Prostate gland (tissue), 2 donors: ENCODE measurements at regions of chr15 and their contacts with region 1.

Region 1: GRCh38 chr15:90219421-90220166 is 14.1 kb downstream of the CIB1 start:
- DNase-seq: no peak
- H3K4me3 ChIP-seq: no peak overlapping the region
- H3K27ac ChIP-seq: peak overlapping the region in 1 of 2 donors; percentile 29
- H3K4me1 ChIP-seq: peaks cover 2% of the 10 kb centered on the region
- H3K27me3 ChIP-seq: no peaks in the 10 kb centered on the region
- CTCF ChIP-seq: peak; percentile 24 to 69 (median 62)
- POLR2A ChIP-seq: no peak

Region 2: DNA sequence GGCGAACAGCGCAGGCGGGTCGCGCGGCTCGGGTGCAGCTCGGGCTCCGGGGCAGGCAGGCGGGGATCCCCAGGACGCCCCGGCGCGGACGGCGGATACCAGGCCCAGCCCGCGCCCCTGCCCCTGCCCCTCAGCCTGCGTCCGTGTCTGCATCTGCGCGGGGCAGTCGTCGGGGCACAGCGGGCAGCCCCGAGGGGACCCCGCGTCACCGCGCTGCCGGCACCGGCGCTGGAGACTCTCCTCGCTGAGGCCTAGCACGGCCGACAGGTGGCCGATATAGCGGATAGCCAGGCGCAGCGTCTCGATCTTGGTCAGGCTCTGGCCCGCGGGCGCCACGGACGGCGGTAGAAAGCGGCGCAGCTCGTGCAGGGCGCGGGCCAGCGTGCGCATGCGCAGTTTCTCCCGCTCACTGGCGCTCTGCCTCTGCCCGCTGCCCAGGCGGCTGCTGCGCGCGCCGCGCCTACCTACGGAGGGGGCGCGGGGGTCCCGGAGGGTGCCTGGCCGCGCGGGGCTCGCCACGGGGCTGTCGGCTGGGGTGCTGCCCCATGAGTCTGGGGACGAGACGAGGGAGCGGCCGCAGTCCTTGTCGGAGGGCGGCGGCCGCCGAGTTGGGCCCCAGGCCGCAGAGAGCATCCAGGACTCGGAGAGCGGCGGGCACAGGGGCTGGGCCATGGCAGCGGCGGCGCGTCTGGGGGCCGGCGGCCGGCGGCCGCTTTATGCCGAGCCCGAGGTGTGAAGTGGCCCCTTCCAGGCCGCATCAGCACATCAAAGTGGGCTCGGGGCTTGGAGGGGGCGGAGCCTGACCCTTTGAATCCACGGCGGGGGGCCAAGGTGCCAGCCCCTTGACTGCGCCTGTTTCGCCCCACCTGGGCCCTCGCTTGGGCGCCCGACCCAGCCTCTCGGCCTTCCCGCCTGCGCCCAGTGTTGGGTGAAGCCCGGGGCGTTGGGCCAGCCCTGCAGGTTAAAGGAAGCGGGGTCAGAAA is 468.7 kb before region 1 on chr15 and contains the start of gene MESP1:
- intact Hi-C with region 1: loop called (anchors 5 kb)
- DNase-seq: peak; percentile 89
- H3K4me3 ChIP-seq: peak within 1 kb of the TSS; percentile 51 to 64
- H3K27ac ChIP-seq: peak within 1 kb of the TSS; percentile 92 to 94
- H3K4me1 ChIP-seq: peaks cover 25% of the 10 kb centered on the region
- H3K27me3 ChIP-seq: no peaks in the 10 kb centered on the region
- CTCF ChIP-seq: peak; percentile 37 to 92 (median 67)
- POLR2A ChIP-seq: peak; percentile 73
- total RNA-seq, gene MESP1: 11.5 to 67.4 TPM

Region 3: DNA sequence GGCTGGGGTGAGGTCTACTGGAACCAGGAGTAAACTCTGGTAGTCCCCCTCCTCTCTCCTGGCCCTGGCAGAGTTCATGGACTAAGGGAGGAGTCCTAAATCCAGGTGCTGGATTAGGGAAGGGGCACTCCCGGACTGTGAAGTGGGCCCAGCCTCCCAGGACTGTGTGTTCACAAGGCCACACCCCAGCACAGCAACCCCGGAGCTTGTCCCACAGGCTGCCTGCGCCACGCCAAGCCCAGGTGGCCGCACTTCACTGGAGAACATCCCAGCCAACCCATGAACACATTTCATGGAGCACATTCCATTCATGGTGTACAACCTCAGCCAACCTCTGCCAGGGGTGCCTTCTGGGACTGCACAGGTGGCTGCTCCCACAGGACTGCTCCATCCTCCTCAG is 315.1 kb before region 1 on chr15:
- intact Hi-C with region 1: loop called (anchors 10 kb)
- DNase-seq: no peak
- H3K4me3 ChIP-seq: no peak overlapping the region
- H3K27ac ChIP-seq: no peak overlapping the region
- H3K4me1 ChIP-seq: no peaks in the 10 kb centered on the region
- H3K27me3 ChIP-seq: no peaks in the 10 kb centered on the region
- CTCF ChIP-seq: no peak
- POLR2A ChIP-seq: no peak

Region 4: DNA sequence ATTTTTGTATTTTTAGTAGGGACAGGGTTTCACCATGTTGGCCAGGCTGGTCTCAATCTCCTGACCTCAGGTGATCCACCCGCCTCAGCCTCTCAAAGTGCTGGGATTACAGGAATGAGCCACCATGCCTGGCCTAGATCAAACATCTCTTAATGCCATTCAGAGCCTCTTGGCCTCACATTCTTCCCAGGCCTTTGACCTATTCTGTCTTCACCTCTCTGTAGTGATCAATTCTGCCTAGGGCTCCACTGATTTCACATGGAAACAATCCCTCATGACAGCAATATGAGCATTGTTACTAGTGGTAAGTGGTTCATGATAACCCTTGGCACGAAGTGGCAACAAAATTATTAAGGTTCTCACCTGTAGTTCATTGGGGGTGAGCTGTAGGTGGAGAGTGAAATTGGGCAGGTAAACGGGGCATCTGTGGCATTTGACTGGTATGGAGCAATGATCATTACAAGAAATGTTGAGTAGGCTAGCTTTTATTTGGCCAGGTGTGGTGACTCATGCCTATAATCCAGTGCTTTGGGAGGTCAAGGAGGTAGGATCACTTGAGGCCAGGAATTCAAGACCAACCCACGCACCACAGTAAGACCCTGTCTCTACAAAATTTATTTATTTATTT is 302.0 kb before region 1 on chr15:
- intact Hi-C with region 1: no loop called
- DNase-seq: no peak
- H3K4me3 ChIP-seq: no peak overlapping the region
- H3K27ac ChIP-seq: no peak overlapping the region
- H3K4me1 ChIP-seq: no peaks in the 10 kb centered on the region
- H3K27me3 ChIP-seq: no peaks in the 10 kb centered on the region
- CTCF ChIP-seq: no peak
- POLR2A ChIP-seq: no peak

Region 5: GRCh38 chr15:90362936-90363212 is 143.3 kb after region 1 on chr15:
- intact Hi-C with region 1: no loop called
- DNase-seq: no peak
- H3K4me3 ChIP-seq: no peak overlapping the region
- H3K27ac ChIP-seq: no peak overlapping the region
- H3K4me1 ChIP-seq: no peaks in the 10 kb centered on the region
- H3K27me3 ChIP-seq: no peaks in the 10 kb centered on the region
- CTCF ChIP-seq: no peak
- POLR2A ChIP-seq: no peak

Region 6: GRCh38 chr15:90895336-90896117 is 675.9 kb after region 1 on chr15:
- intact Hi-C with region 1: no loop called
- DNase-seq: no peak
- H3K4me3 ChIP-seq: no peak overlapping the region
- H3K27ac ChIP-seq: no peak overlapping the region
- H3K4me1 ChIP-seq: no peaks in the 10 kb centered on the region
- H3K27me3 ChIP-seq: no peaks in the 10 kb centered on the region
- CTCF ChIP-seq: no peak
- POLR2A ChIP-seq: no peak